HEK293 (cell line): ENCODE measurements at regions of chr2 and their contacts with region 1.

Region 1: DNA sequence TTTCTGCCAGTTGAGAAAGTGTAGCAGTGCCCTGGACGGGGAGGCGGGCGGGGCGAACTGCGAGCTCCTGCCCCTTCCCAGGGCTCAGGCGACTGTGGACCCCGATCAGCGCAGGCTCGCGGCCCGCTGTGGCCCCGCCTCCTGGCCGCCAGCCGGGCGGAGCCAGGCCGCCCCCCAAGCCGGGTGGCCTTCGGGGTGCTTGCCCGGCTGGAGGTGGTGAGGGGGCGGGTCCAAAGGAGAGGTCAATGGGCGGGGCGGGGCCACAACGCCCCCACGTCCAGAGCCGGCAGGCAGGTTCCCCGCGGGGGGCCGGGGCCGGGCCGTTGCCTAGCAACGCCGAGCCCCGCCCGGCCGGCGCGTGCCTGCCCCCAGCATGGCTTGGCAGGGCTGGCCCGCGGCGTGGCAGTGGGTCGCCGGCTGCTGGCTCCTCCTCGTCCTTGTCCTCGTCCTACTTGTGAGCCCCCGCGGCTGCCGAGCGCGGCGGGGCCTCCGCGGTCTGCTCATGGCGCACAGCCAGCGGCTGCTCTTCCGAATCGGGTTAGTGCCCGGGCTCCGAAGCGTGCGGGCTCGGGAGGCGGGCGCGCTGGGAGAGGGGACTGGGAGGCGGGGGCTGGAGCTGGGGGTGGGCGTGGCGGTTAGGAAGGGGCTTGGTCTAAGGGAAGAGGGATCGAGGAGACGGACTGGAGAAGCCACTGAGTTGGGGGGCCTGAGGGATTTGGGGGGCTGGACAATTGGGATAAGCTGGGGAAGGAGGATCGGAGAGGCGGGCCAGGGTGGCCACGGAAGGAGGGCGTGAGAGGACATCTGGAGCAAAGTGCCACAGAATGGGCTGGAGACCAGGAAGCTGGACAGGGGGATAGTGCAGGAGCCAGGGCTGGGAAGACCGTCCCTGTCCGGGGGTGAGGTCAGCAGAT is 30.8 kb upstream of the TMBIM1 start:
- H3K4me3 ChIP-seq: peak overlapping the region; percentile 56
- H3K27ac ChIP-seq: peak overlapping the region; percentile 63; the same call in 1 of the 2 replicates
- H3K4me1 ChIP-seq: peaks cover 7% of the 10 kb centered on the region
- CTCF ChIP-seq: peak; percentile 44

Region 2: GRCh38 chr2:217890445-217890844 is 432.7 kb before region 1 on chr2:
- CTCF ChIA-PET with region 1: no interaction called
- POLR2A ChIA-PET with region 1: no interaction called
- H3K4me3 ChIP-seq: no peak overlapping the region
- H3K27ac ChIP-seq: no peak overlapping the region
- H3K4me1 ChIP-seq: no peaks in the 10 kb centered on the region
- CTCF ChIP-seq: no peak

Region 3: GRCh38 chr2:218360447-218360846 is 37.3 kb after region 1 on chr2:
- CTCF ChIA-PET with region 1: interaction called, 10 read pairs
- POLR2A ChIA-PET with region 1: no interaction called
- H3K4me3 ChIP-seq: no peak overlapping the region
- H3K27ac ChIP-seq: no peak overlapping the region
- H3K4me1 ChIP-seq: no peaks in the 10 kb centered on the region
- CTCF ChIP-seq: no peak

Region 4: GRCh38 chr2:218381916-218382366 is 58.8 kb after region 1 on chr2 and contains the start of gene SLC11A1:
- CTCF ChIA-PET with region 1: no interaction called
- POLR2A ChIA-PET with region 1: no interaction called
- H3K4me3 ChIP-seq: no peak within 1 kb of the TSS
- H3K27ac ChIP-seq: no peak within 1 kb of the TSS
- H3K4me1 ChIP-seq: no peaks in the 10 kb centered on the region
- CTCF ChIP-seq: no peak

Region 5: DNA sequence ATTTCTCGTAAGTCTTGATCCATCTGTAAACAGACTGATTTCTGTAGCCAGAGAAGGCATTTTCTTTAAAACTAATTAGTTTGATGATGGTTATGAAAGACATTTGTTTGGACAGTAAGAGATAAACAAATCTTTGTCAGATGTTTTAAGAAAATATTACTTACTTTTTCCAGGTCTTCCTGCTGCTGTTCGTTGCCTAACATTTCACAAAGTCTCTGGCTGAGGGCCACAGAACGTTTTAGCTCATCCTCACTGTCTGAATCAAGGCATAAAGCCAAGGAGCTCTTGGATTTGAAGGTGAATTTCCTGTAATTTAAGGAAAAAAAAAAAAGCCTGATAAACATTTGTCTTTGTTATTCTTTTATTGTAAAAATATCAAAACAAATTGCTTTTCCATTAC is 153.5 kb after region 1 on chr2:
- CTCF ChIA-PET with region 1: no interaction called
- POLR2A ChIA-PET with region 1: no interaction called
- H3K4me3 ChIP-seq: no peak overlapping the region
- H3K27ac ChIP-seq: no peak overlapping the region
- H3K4me1 ChIP-seq: no peaks in the 10 kb centered on the region
- CTCF ChIP-seq: no peak